ENCODE measurements at regions of chr5 and their contacts with region 1.

Region 1: DNA sequence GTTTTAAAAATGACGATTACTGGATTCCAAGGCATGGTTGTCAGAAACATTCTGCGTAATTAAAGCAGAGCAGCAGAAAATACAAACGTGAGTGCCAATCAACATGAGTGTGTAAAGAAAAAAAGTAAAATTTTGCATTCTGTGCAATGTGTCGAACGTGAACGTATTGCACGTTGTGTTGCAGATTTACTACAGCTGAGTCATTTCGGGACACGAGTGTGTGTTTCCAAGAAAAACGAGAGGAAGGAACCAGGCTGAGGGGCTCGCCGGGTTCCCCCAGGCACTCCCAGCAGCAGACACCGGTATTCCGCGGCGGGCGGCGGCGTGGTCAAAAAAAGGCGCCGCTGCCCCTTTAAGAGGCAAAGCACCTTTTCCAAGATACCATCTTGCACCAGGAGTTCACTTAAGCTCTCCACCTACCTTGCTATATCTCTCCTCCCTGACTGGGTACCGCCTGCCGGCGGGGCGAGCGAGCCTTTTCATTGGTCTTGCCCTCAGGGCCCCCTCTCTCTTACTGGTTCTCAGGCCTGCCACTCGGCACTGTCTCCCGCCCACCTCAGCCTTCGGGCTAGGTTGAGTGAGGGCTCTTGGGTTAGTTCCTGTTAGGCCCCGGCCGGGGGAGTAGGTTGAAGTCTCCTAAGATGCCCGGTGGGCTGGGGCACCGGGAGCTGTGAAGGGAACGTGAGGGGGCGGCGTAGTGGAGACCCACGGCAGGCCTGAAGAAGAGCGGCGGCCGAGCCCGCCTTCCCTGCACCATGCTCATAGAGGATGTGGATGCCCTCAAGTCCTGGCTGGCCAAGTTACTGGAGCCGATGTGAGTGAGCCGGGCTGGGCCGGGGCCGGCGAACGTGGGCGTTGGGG is at the start of gene RBM27:
- DNase-seq: peak; percentile 97 to 100 (median 98)
- H3K4me3 ChIP-seq: peak within 1 kb of the TSS; percentile 79 to 82
- H3K4me3 Mint-ChIP-seq: no peak within 1 kb of the TSS
- H3K27ac ChIP-seq: peak within 1 kb of the TSS; percentile 63
- H3K27ac Mint-ChIP-seq: no peak within 1 kb of the TSS
- H3K4me1 ChIP-seq: peaks cover 37% of the 10 kb centered on the region
- H3K4me1 Mint-ChIP-seq: peaks cover 13 to 19% (median 16%) of the 10 kb centered on the region in 4 donors
- H3K27me3 ChIP-seq: no peaks in the 10 kb centered on the region
- H3K27me3 Mint-ChIP-seq: no peaks in the 10 kb centered on the region
- total RNA-seq, gene RBM27: 25.7 to 32.3 TPM

Region 2: GRCh38 chr5:146079695-146080361 is 123.4 kb before region 1 on chr5:
- CTCF ChIA-PET with region 1: no interaction called
- POLR2A ChIA-PET with region 1: no interaction called
- intact Hi-C with region 1: no loop called
- DNase-seq: peak in 2 of 5 donors; percentile 1 to 8
- H3K4me3 ChIP-seq: no peak overlapping the region
- H3K4me3 Mint-ChIP-seq: peak overlapping the region in 2 of 8 donors; percentile 18 to 32
- H3K27ac ChIP-seq: no peak overlapping the region
- H3K27ac Mint-ChIP-seq: no peak overlapping the region
- H3K4me1 ChIP-seq: peaks cover 9% of the 10 kb centered on the region
- H3K4me1 Mint-ChIP-seq: peaks cover 7 to 14% (median 12%) of the 10 kb centered on the region in 4 donors
- H3K27me3 ChIP-seq: no peaks in the 10 kb centered on the region
- H3K27me3 Mint-ChIP-seq: peaks cover 3 to 8% of the 10 kb centered on the region in 2 donors

Region 3: GRCh38 chr5:146179696-146180095 is 23.5 kb before region 1 on chr5:
- CTCF ChIA-PET with region 1: interaction called, 5 read pairs
- POLR2A ChIA-PET with region 1: interaction called, 48 read pairs
- intact Hi-C with region 1: loop called (anchors 1 kb)
- DNase-seq: no peak
- H3K4me3 ChIP-seq: no peak overlapping the region
- H3K4me3 Mint-ChIP-seq: peak overlapping the region in 5 of 8 donors; percentile 12 to 33 (median 23)
- H3K27ac ChIP-seq: no peak overlapping the region
- H3K27ac Mint-ChIP-seq: peak overlapping the region in 1 of 7 donors; percentile 25
- H3K4me1 ChIP-seq: peaks cover 30% of the 10 kb centered on the region
- H3K4me1 Mint-ChIP-seq: peaks cover 15 to 30% (median 24%) of the 10 kb centered on the region in 4 donors
- H3K27me3 ChIP-seq: no peaks in the 10 kb centered on the region
- H3K27me3 Mint-ChIP-seq: no peaks in the 10 kb centered on the region

Region 4: DNA sequence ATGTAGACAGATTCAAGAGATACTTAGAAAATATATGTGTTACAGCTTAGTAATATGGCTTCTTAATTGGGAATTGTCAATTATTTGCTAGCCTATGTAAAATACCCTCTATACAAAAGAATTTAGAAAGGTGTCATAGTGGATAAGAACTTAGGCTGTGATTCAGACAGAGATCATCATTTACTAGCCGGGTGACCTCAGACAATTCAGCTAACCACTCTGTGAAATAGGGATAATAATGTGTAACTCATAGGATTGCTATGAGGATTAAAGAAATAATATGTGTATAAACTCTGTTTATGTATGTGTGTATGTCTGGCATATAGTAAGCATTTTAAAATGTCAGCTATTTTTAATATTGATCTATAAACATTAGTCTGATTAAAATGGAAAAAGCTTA is 14.9 kb before region 1 on chr5:
- CTCF ChIA-PET with region 1: interaction called, 5 read pairs
- POLR2A ChIA-PET with region 1: interaction called, 48 read pairs
- intact Hi-C with region 1: no loop called
- DNase-seq: no peak
- H3K4me3 ChIP-seq: no peak overlapping the region
- H3K4me3 Mint-ChIP-seq: no peak overlapping the region
- H3K27ac ChIP-seq: no peak overlapping the region
- H3K27ac Mint-ChIP-seq: no peak overlapping the region
- H3K4me1 ChIP-seq: peaks cover 2% of the 10 kb centered on the region
- H3K4me1 Mint-ChIP-seq: peaks cover 0 to 1% (median 0%) of the 10 kb centered on the region in 4 donors
- H3K27me3 ChIP-seq: no peaks in the 10 kb centered on the region
- H3K27me3 Mint-ChIP-seq: peaks cover 4 to 5% of the 10 kb centered on the region in 2 donors

Region 5: DNA sequence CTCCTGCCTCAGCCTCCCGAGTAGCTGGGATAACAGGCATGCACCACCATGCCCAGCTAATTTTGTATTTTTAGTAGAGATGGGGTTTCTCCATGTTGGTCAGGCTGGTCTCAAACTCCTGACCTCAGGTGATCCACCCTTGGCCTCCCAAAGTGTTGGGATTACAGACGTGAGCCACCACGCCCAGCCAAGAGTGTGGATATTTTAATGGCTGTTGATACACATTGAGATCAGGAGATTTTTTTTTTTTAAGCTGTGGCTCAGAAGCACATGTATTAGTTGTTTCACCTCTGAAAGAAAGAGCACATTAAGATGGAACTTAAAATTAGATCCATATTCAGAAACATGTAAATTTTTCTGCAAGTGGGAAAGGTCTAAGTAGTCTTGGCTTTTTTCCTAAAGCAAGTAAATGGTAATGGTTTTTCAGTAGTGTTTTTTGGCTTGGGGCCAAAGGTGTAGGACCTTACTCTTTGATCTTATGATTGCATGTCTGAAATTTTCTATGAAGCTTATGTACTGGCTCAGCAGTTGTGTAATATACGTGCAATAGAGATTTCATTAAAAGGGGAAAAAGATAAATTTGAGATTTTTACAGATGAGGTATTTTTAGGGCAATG is 10.1 kb after region 1 on chr5:
- CTCF ChIA-PET with region 1: no interaction called
- POLR2A ChIA-PET with region 1: interaction called, 11 read pairs
- intact Hi-C with region 1: no loop called
- DNase-seq: no peak
- H3K4me3 ChIP-seq: no peak overlapping the region
- H3K4me3 Mint-ChIP-seq: peak overlapping the region in 3 of 8 donors; percentile 20 to 59 (median 31)
- H3K27ac ChIP-seq: no peak overlapping the region
- H3K27ac Mint-ChIP-seq: peak overlapping the region in 1 of 7 donors; percentile 46
- H3K4me1 ChIP-seq: peaks cover 51% of the 10 kb centered on the region
- H3K4me1 Mint-ChIP-seq: peaks cover 36 to 68% (median 53%) of the 10 kb centered on the region in 4 donors
- H3K27me3 ChIP-seq: no peaks in the 10 kb centered on the region
- H3K27me3 Mint-ChIP-seq: no peaks in the 10 kb centered on the region

Region 6: DNA sequence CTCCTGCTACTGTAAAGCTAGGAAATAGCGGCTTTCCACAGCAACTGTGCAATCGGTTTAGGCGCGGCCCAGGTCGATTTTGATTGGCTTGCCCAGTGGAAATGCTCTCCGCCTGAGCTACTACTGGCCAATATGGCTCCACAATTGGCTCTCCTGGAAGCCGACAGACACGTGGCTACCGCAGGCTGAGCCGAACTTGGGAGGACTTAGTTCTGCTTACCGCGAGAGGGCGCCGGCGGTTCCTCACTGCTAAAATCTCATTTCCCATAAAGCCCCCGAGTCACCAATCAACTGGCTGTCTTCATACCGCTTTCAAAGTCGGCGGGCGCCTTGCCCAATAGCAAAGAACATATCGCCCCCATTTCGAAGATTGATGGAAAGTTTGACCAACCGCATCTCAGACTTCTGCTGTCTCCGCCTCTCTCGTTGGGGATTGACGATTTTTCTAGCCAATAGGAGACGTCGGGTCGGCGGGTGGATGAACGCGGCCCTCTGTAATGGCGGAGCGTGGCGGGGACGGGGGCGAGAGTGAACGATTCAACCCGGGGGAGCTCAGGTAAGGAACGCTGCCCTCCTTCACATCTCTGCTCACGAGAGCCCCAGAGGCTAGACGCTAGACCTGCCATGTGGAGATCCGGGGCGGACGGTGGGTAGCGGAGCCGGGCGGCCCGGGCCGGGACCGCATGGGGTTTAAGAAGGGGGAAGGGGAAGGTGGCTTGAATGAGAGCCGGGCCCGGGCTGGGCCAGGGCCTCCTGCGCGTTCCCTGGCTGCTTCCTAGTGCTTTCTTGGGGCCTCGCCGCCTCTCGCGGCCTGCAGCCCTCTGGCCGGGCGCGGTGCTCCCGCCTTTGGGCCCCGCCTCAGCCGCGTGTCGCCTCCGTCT is 243.9 kb after region 1 on chr5 and contains the start of gene TCERG1:
- CTCF ChIA-PET with region 1: no interaction called
- POLR2A ChIA-PET with region 1: interaction called, 7 read pairs
- intact Hi-C with region 1: loop called (anchors 1 kb)
- DNase-seq: peak; percentile 99
- H3K4me3 ChIP-seq: peak within 1 kb of the TSS; percentile 79 to 94
- H3K4me3 Mint-ChIP-seq: peak within 1 kb of the TSS; percentile 97 to 100 (median 99)
- H3K27ac ChIP-seq: peak within 1 kb of the TSS; percentile 88
- H3K27ac Mint-ChIP-seq: peak within 1 kb of the TSS; percentile 97 to 100 (median 99)
- H3K4me1 ChIP-seq: peaks cover 38% of the 10 kb centered on the region
- H3K4me1 Mint-ChIP-seq: peaks cover 29 to 49% (median 39%) of the 10 kb centered on the region in 4 donors
- H3K27me3 ChIP-seq: no peaks in the 10 kb centered on the region
- H3K27me3 Mint-ChIP-seq: no peaks in the 10 kb centered on the region
- total RNA-seq, gene TCERG1: 67.9 to 68.5 TPM

Measured in CD4-positive, alpha-beta memory T cell (primary cell).